Naive thymus-derived CD4-positive, alpha-beta T cell (primary cell): ENCODE measurements at regions of chr9 and their contacts with region 1.

Region 1: GRCh38 chr9:74570879-74571512 is 73.9 kb downstream of the RORB start:
- DNase-seq: peak in 1 of 9 donors; percentile 2
- ATAC-seq: no peak
- H3K4me3 ChIP-seq: no peak overlapping the region
- H3K4me3 Mint-ChIP-seq: no peak overlapping the region
- H3K27ac ChIP-seq: no peak overlapping the region
- H3K27ac Mint-ChIP-seq: no peak overlapping the region
- H3K4me1 ChIP-seq: no peaks in the 10 kb centered on the region
- H3K4me1 Mint-ChIP-seq: no peaks in the 10 kb centered on the region
- H3K27me3 ChIP-seq: no peaks in the 10 kb centered on the region
- H3K27me3 Mint-ChIP-seq: no peaks in the 10 kb centered on the region

Region 2: GRCh38 chr9:73200694-73201452 is 1370.1 kb before region 1 on chr9:
- CTCF ChIA-PET with region 1: no interaction called
- POLR2A ChIA-PET with region 1: no interaction called
- intact Hi-C with region 1: loop called in 1 of 2 experiments (anchors 2 kb)
- DNase-seq: peak in 3 of 9 donors; percentile 14 to 34 (median 17)
- ATAC-seq: no peak
- H3K4me3 ChIP-seq: no peak overlapping the region
- H3K4me3 Mint-ChIP-seq: no peak overlapping the region
- H3K27ac ChIP-seq: no peak overlapping the region
- H3K27ac Mint-ChIP-seq: no peak overlapping the region
- H3K4me1 ChIP-seq: no peaks in the 10 kb centered on the region
- H3K4me1 Mint-ChIP-seq: peaks cover 0 to 2% (median 0%) of the 10 kb centered on the region in 7 donors
- H3K27me3 ChIP-seq: peaks cover 0 to 6% of the 10 kb centered on the region in 2 donors
- H3K27me3 Mint-ChIP-seq: peaks cover 4 to 20% (median 12%) of the 10 kb centered on the region in 5 donors